Mammary epithelial cell (primary cell): ENCODE measurements at regions of chr12 and their contacts with region 1.

Region 1: DNA sequence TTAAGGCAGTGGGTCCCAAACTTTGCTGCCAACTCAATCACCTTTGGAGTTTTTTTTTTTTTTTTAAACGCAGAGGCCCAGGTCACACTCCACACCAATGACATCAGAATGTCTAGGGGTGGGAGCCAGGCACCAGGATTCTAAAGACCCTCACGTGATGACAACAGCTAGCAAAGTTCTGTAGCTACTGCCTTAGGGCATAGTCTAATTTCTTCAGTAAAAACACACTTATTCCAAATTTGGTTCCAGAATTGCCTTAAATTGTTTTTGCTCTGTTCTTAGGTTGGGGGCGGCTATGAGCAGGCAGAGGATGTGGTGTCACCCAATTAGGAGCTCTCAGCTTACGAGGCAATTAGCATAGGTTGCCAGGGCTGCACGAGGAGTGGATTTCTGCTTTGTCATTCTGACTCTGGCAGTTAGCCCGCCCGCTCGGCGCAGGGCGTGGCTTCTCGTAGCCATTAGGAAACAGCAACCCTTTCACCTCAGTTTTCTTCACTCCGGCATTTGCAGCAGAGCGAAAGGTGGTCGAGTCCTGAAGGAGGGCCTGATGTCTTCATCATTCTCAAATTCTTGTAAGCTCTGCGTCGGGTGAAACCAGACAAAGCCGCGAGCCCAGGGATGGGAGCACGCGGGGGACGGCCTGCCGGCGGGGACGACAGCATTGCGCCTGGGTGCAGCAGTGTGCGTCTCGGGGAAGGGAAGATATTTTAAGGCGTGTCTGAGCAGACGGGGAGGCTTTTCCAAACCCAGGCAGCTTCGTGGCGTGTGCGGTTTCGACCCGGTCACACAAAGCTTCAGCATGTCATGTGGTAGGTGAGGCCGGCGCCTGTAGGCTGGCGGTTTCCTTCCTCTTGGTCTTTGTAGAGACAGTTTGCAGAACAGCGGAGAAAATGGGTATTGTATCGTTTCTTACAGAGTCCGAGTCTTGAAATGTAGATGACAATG is 16.7 kb upstream of the EID3 start:
- DNase-seq: peak; percentile 97
- H3K4me3 ChIP-seq: peak overlapping the region; percentile 60 to 100 (median 84)
- H3K27ac ChIP-seq: peak overlapping the region; percentile 99
- H3K4me1 ChIP-seq: peaks cover 37% of the 10 kb centered on the region
- H3K27me3 ChIP-seq: no peaks in the 10 kb centered on the region
- CTCF ChIP-seq: no peak

Region 2: DNA sequence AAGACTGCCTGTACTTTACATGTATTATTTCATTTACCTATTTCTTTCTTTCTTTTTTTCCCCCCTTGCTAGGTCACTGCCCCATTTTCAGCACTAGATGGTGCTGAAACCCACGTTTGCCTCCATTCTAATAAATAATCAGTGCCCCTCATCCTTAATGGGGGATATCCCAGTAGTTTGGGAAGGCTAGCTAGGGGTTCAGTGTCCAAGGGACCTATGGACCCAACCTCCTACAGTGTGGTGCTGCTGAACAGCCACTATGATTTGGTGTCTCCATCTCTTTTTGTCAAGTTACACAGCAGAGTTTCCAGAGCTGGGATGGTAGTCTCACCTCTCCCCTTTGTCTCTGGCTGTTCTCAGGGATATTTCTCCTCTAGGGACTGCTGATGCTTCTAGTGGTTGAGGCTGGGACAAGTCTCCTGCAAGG is 229.0 kb before region 1 on chr12:
- CTCF ChIA-PET with region 1: no interaction called
- dilution Hi-C with region 1: no loop called
- in situ Hi-C with region 1: no loop called
- intact Hi-C with region 1: loop called (anchors 5 kb)
- DNase-seq: no peak
- H3K4me3 ChIP-seq: no peak overlapping the region
- H3K27ac ChIP-seq: no peak overlapping the region
- H3K4me1 ChIP-seq: peaks cover 24% of the 10 kb centered on the region
- H3K27me3 ChIP-seq: no peaks in the 10 kb centered on the region
- CTCF ChIP-seq: peak; percentile 80 to 86

Region 3: GRCh38 chr12:104137913-104138796 is 148.7 kb before region 1 on chr12 and contains the start of gene NFYB:
- CTCF ChIA-PET with region 1: no interaction called
- dilution Hi-C with region 1: no loop called
- in situ Hi-C with region 1: no loop called
- intact Hi-C with region 1: loop called (anchors 5 kb)
- DNase-seq: peak; percentile 96
- H3K4me3 ChIP-seq: peak within 1 kb of the TSS; percentile 77 to 87 (median 82)
- H3K27ac ChIP-seq: peak within 1 kb of the TSS; percentile 47
- H3K4me1 ChIP-seq: peaks cover 21% of the 10 kb centered on the region
- H3K27me3 ChIP-seq: no peaks in the 10 kb centered on the region
- CTCF ChIP-seq: no peak
- total RNA-seq, gene NFYB: 15.0 to 16.3 TPM

Region 4: GRCh38 chr12:104263580-104264358 is 23.0 kb before region 1 on chr12:
- CTCF ChIA-PET with region 1: no interaction called
- dilution Hi-C with region 1: no loop called
- in situ Hi-C with region 1: no loop called
- intact Hi-C with region 1: loop called (anchors 1 kb)
- DNase-seq: peak; percentile 92
- H3K4me3 ChIP-seq: peak overlapping the region in 1 of 3 experiments; percentile 3
- H3K27ac ChIP-seq: peak overlapping the region; percentile 87
- H3K4me1 ChIP-seq: peaks cover 20% of the 10 kb centered on the region
- H3K27me3 ChIP-seq: no peaks in the 10 kb centered on the region
- CTCF ChIP-seq: no peak

Region 5: GRCh38 chr12:104834607-104835006 is 547.8 kb after region 1 on chr12:
- CTCF ChIA-PET with region 1: interaction called, 16 read pairs
- dilution Hi-C with region 1: no loop called
- in situ Hi-C with region 1: no loop called
- intact Hi-C with region 1: no loop called
- DNase-seq: no peak
- H3K4me3 ChIP-seq: no peak overlapping the region
- H3K27ac ChIP-seq: no peak overlapping the region
- H3K4me1 ChIP-seq: no peaks in the 10 kb centered on the region
- H3K27me3 ChIP-seq: no peaks in the 10 kb centered on the region
- CTCF ChIP-seq: no peak